Activated CD8-positive, alpha-beta T cell treated with anti-CD3 and anti-CD28 coated beads for 36 hours (primary cell): ENCODE measurements at regions of chr17 and their contacts with region 1.

Region 1: GRCh38 chr17:2244545-2245525 is 58.8 kb downstream of the SMG6 start:
- DNase-seq: peak; percentile 90
- ATAC-seq: peak; percentile 93
- H3K4me3 Mint-ChIP-seq: no peak overlapping the region
- H3K27ac Mint-ChIP-seq: peak overlapping the region; percentile 60
- H3K4me1 Mint-ChIP-seq: peaks cover 51% of the 10 kb centered on the region
- H3K27me3 Mint-ChIP-seq: no peaks in the 10 kb centered on the region
- CTCF ChIP-seq: peak; percentile 98

Region 2: DNA sequence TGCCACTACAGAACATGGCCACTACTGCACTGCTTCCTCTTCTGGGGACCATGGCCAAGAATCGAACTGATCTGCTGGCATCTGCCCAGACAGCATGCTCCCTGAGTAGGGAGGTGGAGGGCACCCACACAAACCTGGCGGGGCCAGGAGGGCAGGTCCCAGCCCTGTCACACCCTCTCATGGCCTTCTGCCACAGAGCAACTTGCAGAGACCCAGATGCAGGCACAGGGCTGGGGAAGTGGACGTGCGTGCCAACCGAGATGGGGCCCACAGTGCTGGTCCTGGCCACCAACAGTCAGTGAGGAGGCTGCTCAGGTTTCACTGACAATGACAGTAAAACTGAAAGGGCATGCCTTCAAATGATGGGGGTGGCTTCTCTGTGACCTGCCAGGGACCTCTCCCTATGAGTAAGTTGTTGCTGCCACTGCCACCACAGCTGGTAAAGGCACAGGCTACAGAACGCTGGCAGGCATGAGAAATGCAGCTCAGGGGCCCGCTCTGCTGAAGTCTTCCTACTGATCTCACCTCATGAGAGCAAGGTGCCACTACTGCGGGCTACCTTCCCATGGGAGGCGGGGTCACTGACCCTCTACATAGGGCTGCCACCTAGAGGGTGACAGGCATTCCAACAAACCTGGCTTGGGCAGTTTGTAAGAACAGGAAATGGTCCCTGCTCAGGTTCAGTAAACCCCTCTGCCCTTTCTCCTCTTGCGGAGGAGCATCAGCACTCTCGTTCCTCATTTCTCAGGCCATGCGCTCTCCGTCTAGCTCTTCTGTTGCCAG is 174.4 kb before region 1 on chr17:
- CTCF ChIA-PET with region 1: interaction called, 30 read pairs
- POLR2A ChIA-PET with region 1: interaction called, 4 read pairs
- intact Hi-C with region 1: no loop called
- DNase-seq: peak; percentile 93
- ATAC-seq: peak; percentile 85
- H3K4me3 Mint-ChIP-seq: peak overlapping the region; percentile 21
- H3K27ac Mint-ChIP-seq: peak overlapping the region; percentile 80
- H3K4me1 Mint-ChIP-seq: peaks cover 48% of the 10 kb centered on the region
- H3K27me3 Mint-ChIP-seq: no peaks in the 10 kb centered on the region
- CTCF ChIP-seq: no peak

Region 3: DNA sequence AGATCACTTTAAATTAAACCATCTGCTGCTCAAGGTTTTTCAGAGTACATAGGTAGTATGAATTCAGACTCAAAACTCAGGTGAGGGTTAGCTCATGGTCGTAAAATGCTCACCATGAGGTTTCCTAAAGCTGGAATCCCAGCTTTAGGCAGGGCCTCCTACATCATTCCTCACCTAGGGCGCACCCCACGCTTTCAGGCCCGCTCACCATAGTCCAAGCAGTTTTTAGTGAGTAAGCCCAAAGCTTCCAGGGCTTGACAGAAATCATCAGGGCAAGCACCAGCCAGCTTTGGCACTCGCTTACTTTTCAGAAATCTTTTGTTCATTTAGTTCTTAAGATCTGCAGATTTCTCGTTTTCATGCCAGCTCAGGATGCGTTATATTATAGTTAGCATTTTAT is 100.1 kb before region 1 on chr17:
- CTCF ChIA-PET with region 1: interaction called, 10 read pairs
- POLR2A ChIA-PET with region 1: no interaction called
- intact Hi-C with region 1: no loop called
- DNase-seq: no peak
- ATAC-seq: no peak
- H3K4me3 Mint-ChIP-seq: no peak overlapping the region
- H3K27ac Mint-ChIP-seq: no peak overlapping the region
- H3K4me1 Mint-ChIP-seq: peaks cover 8% of the 10 kb centered on the region
- H3K27me3 Mint-ChIP-seq: no peaks in the 10 kb centered on the region
- CTCF ChIP-seq: no peak

Region 4: GRCh38 chr17:2192367-2193057 is 52.3 kb before region 1 on chr17:
- CTCF ChIA-PET with region 1: interaction called, 16 read pairs
- POLR2A ChIA-PET with region 1: no interaction called
- intact Hi-C with region 1: loop called (anchors 10 kb)
- DNase-seq: peak; percentile 86
- ATAC-seq: peak; percentile 86
- H3K4me3 Mint-ChIP-seq: no peak overlapping the region
- H3K27ac Mint-ChIP-seq: peak overlapping the region; percentile 50
- H3K4me1 Mint-ChIP-seq: peaks cover 54% of the 10 kb centered on the region
- H3K27me3 Mint-ChIP-seq: no peaks in the 10 kb centered on the region
- CTCF ChIP-seq: no peak

Region 5: GRCh38 chr17:2222901-2223616 is 21.8 kb before region 1 on chr17:
- CTCF ChIA-PET with region 1: interaction called, 60 read pairs
- POLR2A ChIA-PET with region 1: no interaction called
- intact Hi-C with region 1: no loop called
- DNase-seq: peak; percentile 74
- ATAC-seq: peak; percentile 86
- H3K4me3 Mint-ChIP-seq: peak overlapping the region; percentile 58
- H3K27ac Mint-ChIP-seq: peak overlapping the region; percentile 80
- H3K4me1 Mint-ChIP-seq: peaks cover 43% of the 10 kb centered on the region
- H3K27me3 Mint-ChIP-seq: no peaks in the 10 kb centered on the region
- CTCF ChIP-seq: no peak

Region 6: DNA sequence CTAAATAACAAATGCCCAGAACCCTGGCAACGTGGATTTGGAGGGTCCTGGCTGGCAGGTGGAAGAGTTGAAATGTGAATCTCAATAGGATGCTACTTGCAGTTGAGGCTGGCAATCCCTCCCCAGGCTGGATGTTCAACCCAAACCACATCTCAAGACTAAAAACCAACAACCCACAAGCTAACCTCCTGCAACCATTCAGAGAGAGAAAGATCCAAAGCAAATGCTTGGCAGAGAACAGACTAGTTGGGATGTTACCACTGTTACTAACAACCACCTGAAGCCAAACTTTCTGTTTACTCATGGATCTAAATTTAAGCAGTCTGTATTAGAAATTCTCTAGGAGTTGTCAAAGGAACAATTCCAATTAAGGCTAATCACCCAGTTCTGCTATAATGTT is 30.9 kb after region 1 on chr17:
- CTCF ChIA-PET with region 1: interaction called, 119 read pairs
- POLR2A ChIA-PET with region 1: no interaction called
- intact Hi-C with region 1: no loop called
- DNase-seq: no peak
- ATAC-seq: no peak
- H3K4me3 Mint-ChIP-seq: no peak overlapping the region
- H3K27ac Mint-ChIP-seq: peak overlapping the region; percentile 68
- H3K4me1 Mint-ChIP-seq: peaks cover 52% of the 10 kb centered on the region
- H3K27me3 Mint-ChIP-seq: no peaks in the 10 kb centered on the region
- CTCF ChIP-seq: no peak